ENCODE measurements at regions of chr1 and their contacts with region 1.

Region 1: DNA sequence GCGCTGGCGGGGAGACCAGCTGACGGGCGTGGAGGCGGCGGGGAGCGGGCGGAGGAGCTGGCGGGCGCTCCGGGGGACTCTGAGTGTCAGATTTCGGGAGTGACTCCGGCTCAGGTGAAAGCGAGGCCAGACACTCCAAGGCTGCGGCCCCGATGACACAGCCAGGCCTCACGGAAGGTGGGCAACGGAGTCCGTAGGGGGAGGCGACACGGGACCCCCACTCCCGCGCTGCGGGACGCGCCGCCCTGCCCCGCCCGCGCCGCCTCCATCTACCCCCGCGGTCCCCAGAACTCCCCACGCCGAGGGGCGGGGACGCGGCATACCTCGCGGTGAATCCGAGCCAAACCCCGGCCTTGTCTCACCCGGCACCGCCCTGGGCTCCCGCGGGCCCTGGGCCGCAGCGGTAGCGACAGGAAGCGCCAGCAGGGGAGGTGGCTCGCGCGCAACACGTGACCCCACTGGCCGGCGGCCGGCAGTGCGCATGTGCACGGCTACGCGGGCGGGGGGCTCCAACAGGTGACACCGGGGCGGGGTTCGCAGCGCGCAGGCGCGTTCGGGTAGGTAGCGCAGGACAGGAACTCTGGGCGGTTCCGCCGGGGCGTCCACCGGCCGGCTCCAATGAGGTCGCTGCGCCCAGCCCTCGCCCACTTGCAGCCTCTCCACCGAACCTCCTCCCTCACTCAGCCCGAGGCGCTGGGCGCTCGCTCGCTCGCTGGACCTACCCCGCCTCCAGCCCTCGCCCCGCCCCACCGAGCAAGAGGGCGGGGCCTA is at the start of gene CC2D1B:
- DNase-seq: peak; percentile 99
- ATAC-seq: peak; percentile 96
- H3K4me3 ChIP-seq: peak within 1 kb of the TSS; percentile 73 to 83
- H3K27ac ChIP-seq: peak within 1 kb of the TSS; percentile 45 to 62
- H3K4me1 ChIP-seq: peaks cover 0 to 4% of the 10 kb centered on the region in 2 donors
- H3K27me3 ChIP-seq: no peaks in the 10 kb centered on the region
- total RNA-seq, gene CC2D1B: 31.3 to 36.0 TPM

Region 2: DNA sequence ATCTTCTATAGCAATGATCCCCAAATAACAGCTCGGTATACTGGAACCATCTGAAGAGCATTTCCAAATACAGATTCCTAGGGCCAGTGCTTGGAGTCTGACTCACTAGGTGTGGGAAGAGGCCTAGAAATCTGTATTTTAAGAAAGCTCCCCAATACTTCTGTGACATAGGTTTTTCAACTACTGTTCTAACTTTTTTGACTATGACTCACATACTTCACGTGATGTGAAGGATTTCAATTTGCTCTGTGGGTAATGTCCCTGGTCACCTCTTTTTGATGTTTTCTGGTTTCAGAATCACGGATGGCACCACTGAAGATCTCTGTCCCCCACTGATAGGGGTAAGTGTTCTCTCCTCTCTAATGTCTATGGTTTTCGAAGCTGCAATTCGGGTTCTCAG is 27.2 kb after region 1 on chr1:
- intact Hi-C with region 1: no loop called
- DNase-seq: no peak
- ATAC-seq: no peak
- H3K4me3 ChIP-seq: no peak overlapping the region
- H3K27ac ChIP-seq: no peak overlapping the region
- H3K4me1 ChIP-seq: no peaks in the 10 kb centered on the region
- H3K27me3 ChIP-seq: no peaks in the 10 kb centered on the region

Region 3: DNA sequence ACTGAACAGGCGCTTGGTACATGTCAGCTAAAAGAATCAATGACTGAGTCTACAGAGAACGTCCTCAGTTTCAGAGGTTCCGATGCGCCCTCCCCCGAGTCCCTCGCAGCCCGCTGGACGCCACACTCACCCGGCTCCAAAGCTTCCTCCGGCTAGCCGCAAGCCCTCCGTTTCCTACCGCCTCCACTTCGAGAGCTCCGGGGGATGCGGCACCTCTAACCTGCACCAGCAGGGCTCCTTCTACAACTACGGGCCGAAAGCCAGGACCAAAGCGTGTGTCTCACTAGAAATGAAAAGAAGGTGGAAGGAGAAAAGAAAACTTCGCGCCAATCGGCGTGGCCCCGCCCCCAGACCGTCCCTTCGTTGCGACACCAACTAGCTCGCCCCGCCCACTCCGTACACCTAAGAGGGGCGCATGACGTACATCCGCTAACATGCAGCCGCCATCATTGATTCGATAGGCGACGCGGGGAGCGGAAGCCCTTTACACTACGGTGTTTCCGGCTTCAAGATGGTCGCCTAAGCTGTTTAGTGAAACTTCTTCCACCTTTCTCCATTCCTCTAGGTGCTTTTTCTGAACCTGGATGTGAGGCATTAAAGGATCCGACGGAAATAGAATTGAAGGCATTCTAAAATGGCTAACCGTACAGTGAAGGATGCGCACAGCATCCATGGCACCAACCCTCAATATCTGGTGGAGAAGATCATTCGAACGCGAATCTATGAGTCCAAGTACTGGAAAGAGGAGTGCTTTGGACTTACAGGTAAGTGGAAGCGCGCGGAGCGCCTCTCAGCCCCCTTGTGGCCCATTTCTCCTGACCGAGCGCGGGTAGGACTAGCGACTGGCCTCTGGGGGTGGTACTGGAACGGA is 38.4 kb after region 1 on chr1 and contains the starts of genes ORC1 and PRPF38A:
- intact Hi-C with region 1: loop called in 1 of 2 experiments (anchors 2 kb)
- DNase-seq: peak; percentile 98 to 99
- ATAC-seq: peak; percentile 100
- H3K4me3 ChIP-seq: peak within 1 kb of the TSS; percentile 90 to 98
- H3K27ac ChIP-seq: peak within 1 kb of the TSS in 1 of 2 donors; percentile 91
- H3K4me1 ChIP-seq: peaks cover 0 to 2% of the 10 kb centered on the region in 2 donors
- H3K27me3 ChIP-seq: no peaks in the 10 kb centered on the region
- total RNA-seq, gene ORC1: 0.58 to 0.96 TPM
- total RNA-seq, gene PRPF38A: 34.7 to 36.2 TPM

Measured in aorta (tissue), 5 donors.